Motor neuron (in vitro differentiated cells): ENCODE measurements at regions of chr6 and their contacts with region 1.

Region 1: GRCh38 chr6:138773177-138774091 is at the start of gene CCDC28A:
- ATAC-seq: peak; percentile 92 to 97 (median 95)
- H3K4me3 ChIP-seq: peak within 1 kb of the TSS; percentile 54 to 99 (median 85)
- H3K27ac ChIP-seq: peak within 1 kb of the TSS; percentile 95 to 97
- H3K4me1 ChIP-seq: peaks cover 3 to 6% of the 10 kb centered on the region in 2 donors
- total RNA-seq, gene CCDC28A: 5.0 to 18.3 (median 9.6) TPM

Region 2: DNA sequence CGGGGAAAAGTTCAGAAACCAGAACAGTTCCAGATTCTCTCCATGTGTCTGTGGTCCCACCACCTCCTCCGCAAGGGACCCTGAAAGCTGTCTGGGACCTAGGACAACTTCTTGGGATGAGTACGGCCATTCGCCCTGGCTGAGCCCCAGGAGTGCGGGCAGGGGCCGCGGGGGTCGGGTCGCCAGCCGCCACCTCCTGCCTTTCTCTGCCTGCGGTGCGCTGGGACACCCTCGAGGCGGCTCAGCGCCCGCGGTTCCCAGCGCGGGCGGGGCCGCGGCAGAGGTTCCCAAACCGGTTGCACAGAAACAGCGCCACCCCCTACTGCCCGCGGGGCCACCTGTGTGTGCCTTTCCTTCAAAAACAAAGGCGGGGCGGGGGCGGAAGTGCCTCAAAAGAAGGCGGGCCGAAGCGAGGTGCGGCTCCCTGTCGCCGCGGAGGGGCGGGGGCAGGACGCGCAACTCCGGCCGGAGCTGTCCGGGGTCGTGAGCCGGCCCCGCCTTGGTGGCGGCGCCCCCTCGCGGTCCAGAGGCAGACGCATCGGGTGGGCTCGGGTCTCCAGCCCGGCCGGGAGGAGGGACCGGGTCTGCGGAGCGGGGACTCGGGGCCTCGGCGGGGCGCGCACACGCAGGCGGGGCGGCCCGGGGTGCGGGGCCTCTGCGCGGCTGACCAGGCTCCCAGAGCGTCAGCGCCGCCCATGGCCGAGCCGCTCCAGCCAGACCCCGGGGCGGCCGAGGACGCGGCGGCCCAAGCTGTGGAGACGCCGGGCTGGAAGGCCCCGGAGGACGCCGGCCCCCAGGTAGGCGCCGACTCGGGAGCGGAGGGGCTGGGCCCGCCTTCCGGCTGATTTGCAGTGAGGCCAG is 369.4 kb before region 1 on chr6 and contains the start of gene HEBP2:
- in situ Hi-C with region 1: loop called in 2 of 9 experiments (anchors 25 kb)
- ATAC-seq: peak; percentile 81 to 94 (median 91)
- H3K4me3 ChIP-seq: peak within 1 kb of the TSS; percentile 48 to 89 (median 54)
- H3K27ac ChIP-seq: peak within 1 kb of the TSS in 1 of 2 donors; percentile 18
- H3K4me1 ChIP-seq: peaks cover 0 to 10% of the 10 kb centered on the region in 2 donors
- total RNA-seq, gene HEBP2: 11.8 to 27.9 (median 15.0) TPM

Region 3: GRCh38 chr6:138428944-138429598 is 344.4 kb before region 1 on chr6:
- in situ Hi-C with region 1: loop called in 7 of 9 experiments (anchors 25 kb)
- ATAC-seq: peak; percentile 38 to 73 (median 46)
- H3K4me3 ChIP-seq: no peak overlapping the region
- H3K27ac ChIP-seq: no peak overlapping the region
- H3K4me1 ChIP-seq: no peaks in the 10 kb centered on the region

Region 4: GRCh38 chr6:138588805-138589434 is 184.5 kb before region 1 on chr6:
- in situ Hi-C with region 1: loop called in 6 of 9 experiments (anchors 10 to 25 kb)
- ATAC-seq: peak; percentile 9 to 52 (median 47)
- H3K4me3 ChIP-seq: no peak overlapping the region
- H3K27ac ChIP-seq: no peak overlapping the region
- H3K4me1 ChIP-seq: peaks cover 11 to 15% of the 10 kb centered on the region in 2 donors